ENCODE measurements at regions of chr7 and their contacts with region 1.

Region 1: DNA sequence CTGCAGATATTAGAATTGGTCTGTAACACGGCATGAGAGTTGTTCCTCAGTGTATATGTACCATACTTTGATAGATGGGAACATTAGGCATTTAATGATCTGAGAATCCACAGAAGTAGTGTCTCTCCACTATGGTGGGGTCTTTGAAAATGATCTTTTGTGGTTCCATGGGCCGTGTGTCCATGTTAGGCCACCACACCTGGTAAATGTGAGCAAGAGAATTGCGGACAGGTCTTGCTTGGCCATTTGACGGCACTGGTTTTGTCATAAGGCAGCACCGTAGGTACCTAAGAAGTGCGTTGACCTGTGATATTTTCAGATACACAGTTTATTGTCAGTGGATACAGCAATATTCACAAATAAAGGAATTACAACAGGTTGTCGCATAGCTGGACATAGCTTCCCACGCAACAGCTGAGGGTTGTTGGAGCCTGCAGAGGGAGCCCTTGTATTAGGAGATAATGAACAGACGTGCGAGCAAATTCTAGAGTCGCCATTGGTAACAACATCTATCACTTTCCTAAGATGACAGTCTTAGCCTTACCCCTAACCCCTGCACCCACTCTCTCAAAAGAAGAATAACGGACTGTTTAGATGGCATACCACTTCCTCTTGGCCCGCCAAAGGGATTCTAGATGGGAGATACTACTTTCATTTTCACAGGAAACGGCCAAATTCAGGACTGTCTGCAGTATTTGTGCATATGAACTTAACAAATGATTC is 111.4 kb downstream of the COL28A1 start:
- DNase-seq: peak; percentile 54 to 74
- ATAC-seq: peak; percentile 98 to 99
- H3K4me3 ChIP-seq: peak overlapping the region; percentile 40
- H3K27ac ChIP-seq: peak overlapping the region; percentile 46 to 66; a peak in 5 of 6 replicates
- H3K4me1 ChIP-seq: no peaks in the 10 kb centered on the region
- CTCF ChIP-seq: peak; percentile 97
- EP300 ChIP-seq: no peak
- POLR2A ChIP-seq: no peak
- RAD21 ChIP-seq: peak; percentile 99

Region 2: DNA sequence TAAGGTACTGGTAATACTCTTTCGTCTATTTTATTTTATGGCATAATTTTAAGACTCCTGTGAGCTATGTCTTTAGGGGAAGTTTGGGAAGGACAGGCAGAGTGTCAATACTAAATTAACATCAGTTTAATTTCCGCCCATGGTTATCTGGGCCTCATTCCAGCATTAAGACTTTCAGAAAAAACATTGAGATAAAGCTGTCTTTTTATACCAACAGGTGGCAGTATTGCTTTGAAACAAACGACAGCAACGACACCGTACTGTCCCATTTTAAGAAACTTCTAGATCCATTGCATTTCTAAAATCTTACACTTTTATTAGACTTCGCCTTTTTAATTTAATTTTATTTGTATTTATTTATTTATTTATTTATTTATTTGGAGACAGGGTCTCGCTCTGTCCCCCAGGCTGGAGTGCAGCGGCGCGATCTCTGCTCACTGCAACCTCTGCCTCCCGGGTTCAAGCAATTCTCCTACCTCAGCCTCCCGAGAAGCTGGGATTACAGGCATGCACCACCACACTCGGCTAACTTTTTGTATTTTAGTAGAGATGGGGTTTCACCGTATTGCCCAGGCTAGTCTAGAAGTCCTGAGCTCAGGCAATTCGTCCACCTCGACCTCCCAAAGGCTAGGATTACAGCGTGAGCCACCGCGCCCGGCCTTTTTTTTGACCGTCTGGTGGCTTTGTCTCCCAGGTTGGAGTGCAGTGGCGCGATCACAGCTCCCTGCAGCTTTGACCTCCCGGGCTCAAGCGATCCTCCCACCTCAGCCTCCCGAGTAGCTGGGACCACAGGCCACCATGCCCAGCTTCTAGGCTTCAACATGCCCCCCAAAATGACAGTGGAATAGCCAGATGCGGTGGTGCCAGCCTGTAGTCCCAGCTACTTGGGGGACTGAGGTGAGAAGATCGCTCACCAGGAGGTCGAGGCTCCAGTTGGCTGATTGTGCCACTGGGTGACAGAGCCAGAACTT is 320.7 kb before region 1 on chr7:
- CTCF ChIA-PET with region 1: interaction called, 37 read pairs
- POLR2A ChIA-PET with region 1: no interaction called
- DNase-seq: peak; percentile 46 to 66
- ATAC-seq: peak; percentile 53 to 82; a peak in 3 of 6 replicates
- H3K4me3 ChIP-seq: no peak overlapping the region
- H3K27ac ChIP-seq: peak overlapping the region in 1 of 2 experiments; percentile 33; a peak in 1 of 6 replicates
- H3K4me1 ChIP-seq: peaks cover 13% of the 10 kb centered on the region
- CTCF ChIP-seq: peak; percentile 87
- EP300 ChIP-seq: no peak
- POLR2A ChIP-seq: no peak
- RAD21 ChIP-seq: peak; percentile 84 to 90

Region 3: DNA sequence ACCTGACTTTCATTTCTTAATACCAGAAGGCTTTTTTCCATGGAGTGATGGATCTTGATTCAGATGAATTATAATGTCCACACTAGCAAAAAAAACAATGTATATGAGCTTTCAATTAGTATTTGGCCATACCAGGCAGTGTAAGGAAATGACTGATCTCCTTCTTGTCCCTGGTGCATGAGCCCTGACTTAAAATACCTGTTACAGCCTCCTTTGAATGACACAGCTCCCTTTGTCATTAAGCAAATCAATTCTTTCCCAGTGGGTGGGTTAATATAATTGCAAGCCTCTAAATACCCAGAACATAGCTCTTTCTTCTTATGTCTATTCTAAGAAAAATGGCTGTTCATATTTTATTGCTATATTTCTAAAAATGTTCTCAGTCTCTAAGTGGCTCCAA is 77.3 kb before region 1 on chr7:
- CTCF ChIA-PET with region 1: no interaction called
- POLR2A ChIA-PET with region 1: no interaction called
- DNase-seq: no peak
- ATAC-seq: no peak
- H3K4me3 ChIP-seq: no peak overlapping the region
- H3K27ac ChIP-seq: no peak overlapping the region
- H3K4me1 ChIP-seq: no peaks in the 10 kb centered on the region
- CTCF ChIP-seq: no peak
- EP300 ChIP-seq: no peak
- POLR2A ChIP-seq: no peak
- RAD21 ChIP-seq: no peak

Region 4: GRCh38 chr7:7524121-7524520 is 99.8 kb after region 1 on chr7:
- CTCF ChIA-PET with region 1: interaction called, 14 read pairs
- POLR2A ChIA-PET with region 1: no interaction called
- DNase-seq: no peak
- ATAC-seq: no peak
- H3K4me3 ChIP-seq: no peak overlapping the region
- H3K27ac ChIP-seq: no peak overlapping the region
- H3K4me1 ChIP-seq: peaks cover 23% of the 10 kb centered on the region
- CTCF ChIP-seq: no peak
- EP300 ChIP-seq: no peak
- POLR2A ChIP-seq: no peak
- RAD21 ChIP-seq: no peak

Region 5: GRCh38 chr7:7535691-7536090 is 111.4 kb after region 1 on chr7 and contains the start of gene COL28A1:
- CTCF ChIA-PET with region 1: interaction called, 141 read pairs
- POLR2A ChIA-PET with region 1: no interaction called
- DNase-seq: no peak
- ATAC-seq: no peak
- H3K4me3 ChIP-seq: no peak within 1 kb of the TSS
- H3K27ac ChIP-seq: no peak within 1 kb of the TSS
- H3K4me1 ChIP-seq: no peaks in the 10 kb centered on the region
- CTCF ChIP-seq: no peak
- EP300 ChIP-seq: no peak
- POLR2A ChIP-seq: no peak
- RAD21 ChIP-seq: no peak
- polyA plus RNA-seq, gene COL28A1: 0.08 and 0.13 TPM in 2 replicates

Region 6: DNA sequence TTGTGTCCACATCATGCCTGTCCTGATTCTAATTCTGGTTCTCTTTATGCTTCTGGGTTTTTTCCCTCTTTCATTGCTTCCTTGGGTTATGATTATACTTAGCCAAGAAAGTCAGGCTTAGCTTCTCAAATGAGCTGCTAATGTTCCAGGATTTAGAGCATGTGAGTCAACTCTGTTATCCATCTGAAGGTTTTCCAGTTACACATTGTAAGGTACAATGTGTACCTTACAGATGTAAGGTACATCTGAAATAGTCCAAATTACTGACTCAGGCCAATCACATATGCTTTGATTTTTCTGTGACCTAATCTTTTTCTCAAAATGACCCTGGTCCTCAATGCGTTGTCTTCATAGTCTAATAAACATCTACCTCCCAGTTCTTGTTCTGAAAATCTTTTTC is 129.1 kb after region 1 on chr7:
- CTCF ChIA-PET with region 1: interaction called, 14 read pairs
- POLR2A ChIA-PET with region 1: no interaction called
- DNase-seq: no peak
- ATAC-seq: no peak
- H3K4me3 ChIP-seq: no peak overlapping the region
- H3K27ac ChIP-seq: no peak overlapping the region
- H3K4me1 ChIP-seq: peaks cover 9% of the 10 kb centered on the region; the same call in 2 of the 3 replicates
- CTCF ChIP-seq: no peak
- EP300 ChIP-seq: no peak
- POLR2A ChIP-seq: no peak
- RAD21 ChIP-seq: no peak